Ovary (tissue), 10 donors: ENCODE measurements at regions of chr11 and their contacts with region 1.

Region 1: DNA sequence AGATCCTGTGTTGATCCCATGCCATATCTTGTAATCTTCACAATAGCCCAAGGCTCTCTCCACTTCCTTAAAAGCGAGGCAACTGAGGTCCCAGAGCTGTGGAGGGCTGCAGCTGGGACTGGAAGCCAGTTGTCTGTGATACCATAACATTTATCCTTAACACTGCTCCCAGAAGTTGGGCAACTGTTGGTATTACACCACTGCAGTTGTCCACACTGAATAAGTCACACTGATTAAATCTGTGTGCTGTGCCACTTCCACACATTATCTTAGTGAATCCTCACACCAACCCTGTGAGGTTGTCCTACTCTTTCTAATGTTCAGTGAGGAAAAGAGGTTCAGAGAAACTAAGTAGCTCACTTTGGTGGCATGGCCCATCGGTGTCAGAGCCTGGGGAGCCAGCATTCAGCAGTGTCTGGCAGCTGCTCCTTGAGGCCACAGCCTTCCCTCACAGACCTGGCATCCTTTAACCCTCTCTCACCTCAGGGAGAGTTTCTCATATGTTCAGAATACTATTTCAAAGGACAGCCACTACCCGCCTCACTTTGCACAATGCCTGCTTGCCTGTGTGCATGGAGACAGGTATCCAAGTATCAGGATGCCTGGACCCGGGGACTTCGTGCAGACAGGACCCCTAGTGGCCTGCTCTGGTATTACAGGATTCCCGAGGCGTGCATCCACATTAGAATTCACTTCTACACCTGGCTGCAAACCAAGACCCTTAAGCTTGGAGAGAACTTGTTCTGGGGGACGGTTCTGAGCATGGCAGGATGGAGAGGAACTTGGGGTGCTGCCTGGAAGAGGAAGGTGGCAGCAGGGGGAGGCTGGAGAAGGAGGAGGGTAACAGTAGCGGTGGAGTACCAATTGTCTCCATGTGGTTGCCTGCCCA is 221.9 kb upstream of the TBCEL start:
- DNase-seq: peak; percentile 60 to 80 (median 76)
- H3K4me3 ChIP-seq: no peak overlapping the region
- H3K27ac ChIP-seq: no peak overlapping the region
- H3K4me1 ChIP-seq: no peaks in the 10 kb centered on the region
- H3K27me3 ChIP-seq: no peaks in the 10 kb centered on the region
- CTCF ChIP-seq: peak; percentile 68 to 80 (median 74)
- EP300 ChIP-seq: no peak
- POLR2A ChIP-seq: no peak

Region 2: DNA sequence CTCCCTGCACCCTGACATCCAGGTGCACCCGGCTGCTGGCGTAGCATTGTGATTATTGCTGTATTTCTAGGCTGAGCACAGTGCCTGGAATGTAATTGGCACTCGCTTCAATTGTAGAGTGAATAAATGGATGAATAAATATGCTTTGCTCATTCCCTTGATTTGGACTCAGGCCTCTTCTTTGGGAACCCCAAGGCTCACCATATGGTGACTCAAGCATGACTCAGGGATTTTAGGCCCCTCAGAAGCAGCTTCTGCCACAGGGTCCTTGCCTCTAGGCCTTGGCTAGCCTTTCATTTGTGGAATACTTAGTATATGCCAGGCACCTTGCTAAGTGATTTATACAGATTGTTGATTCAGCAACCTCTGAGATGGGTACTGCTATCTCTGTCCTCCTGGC is 211.6 kb before region 1 on chr11:
- intact Hi-C with region 1: no loop called
- DNase-seq: peak in 2 of 5 donors; percentile 3 to 7
- H3K4me3 ChIP-seq: no peak overlapping the region
- H3K27ac ChIP-seq: no peak overlapping the region
- H3K4me1 ChIP-seq: peaks cover 11% of the 10 kb centered on the region
- H3K27me3 ChIP-seq: no peaks in the 10 kb centered on the region
- CTCF ChIP-seq: no peak
- EP300 ChIP-seq: no peak
- POLR2A ChIP-seq: no peak

Region 3: GRCh38 chr11:120688163-120688562 is 113.9 kb before region 1 on chr11:
- intact Hi-C with region 1: loop called in 1 of 4 experiments (anchors 5 kb)
- DNase-seq: no peak
- H3K4me3 ChIP-seq: no peak overlapping the region
- H3K27ac ChIP-seq: no peak overlapping the region
- H3K4me1 ChIP-seq: no peaks in the 10 kb centered on the region
- H3K27me3 ChIP-seq: no peaks in the 10 kb centered on the region
- CTCF ChIP-seq: no peak
- EP300 ChIP-seq: no peak
- POLR2A ChIP-seq: no peak

Region 4: DNA sequence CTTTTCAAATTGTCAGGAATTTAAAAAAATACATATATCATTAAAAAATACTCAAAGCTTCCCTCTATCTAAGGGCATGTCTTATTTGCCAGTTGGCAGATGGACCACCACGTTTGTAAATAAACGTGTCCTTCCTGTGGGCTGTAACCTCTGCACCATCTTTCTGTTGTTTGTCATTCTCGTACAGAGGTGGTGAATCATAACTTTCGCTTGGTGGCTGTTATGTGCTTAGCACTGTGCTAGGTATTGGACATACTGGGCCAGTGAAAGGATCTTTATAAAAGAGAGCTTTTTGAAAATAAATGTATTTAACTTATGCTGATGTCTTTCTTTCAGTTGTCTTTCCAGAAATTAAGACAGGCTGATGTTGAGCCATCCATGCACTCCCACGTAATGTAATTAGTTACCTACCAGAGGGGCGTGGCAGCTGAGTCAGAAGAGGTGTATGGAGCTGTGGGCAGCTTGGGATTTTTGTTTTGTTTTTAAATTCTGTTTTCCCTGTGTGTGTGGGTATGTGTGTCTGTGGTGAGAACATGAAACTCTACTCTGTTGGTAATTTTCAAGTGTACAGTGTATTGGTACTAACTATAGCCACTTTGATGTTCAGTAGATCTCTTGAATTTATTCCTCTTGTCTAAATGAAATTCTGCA is 361.7 kb after region 1 on chr11:
- intact Hi-C with region 1: no loop called
- DNase-seq: no peak
- H3K4me3 ChIP-seq: no peak overlapping the region
- H3K27ac ChIP-seq: no peak overlapping the region
- H3K4me1 ChIP-seq: no peaks in the 10 kb centered on the region
- H3K27me3 ChIP-seq: no peaks in the 10 kb centered on the region
- CTCF ChIP-seq: no peak
- EP300 ChIP-seq: no peak
- POLR2A ChIP-seq: no peak